Activated B cell treated with CpG ODN at 0.5 μM for 24 hours (primary cell): ENCODE measurements at regions of chr12 and their contacts with region 1.

Region 1: GRCh38 chr12:13864081-13864673 is 117.2 kb downstream of the GRIN2B start:
- DNase-seq: peak; percentile 45
- ATAC-seq: peak; percentile 79
- H3K4me3 Mint-ChIP-seq: no peak overlapping the region
- H3K27ac Mint-ChIP-seq: no peak overlapping the region
- H3K4me1 Mint-ChIP-seq: no peaks in the 10 kb centered on the region
- H3K27me3 Mint-ChIP-seq: peaks cover 29% of the 10 kb centered on the region
- CTCF ChIP-seq: peak; percentile 80

Region 2: GRCh38 chr12:13941258-13942249 is 77.4 kb after region 1 on chr12:
- CTCF ChIA-PET with region 1: interaction called, 3 read pairs
- POLR2A ChIA-PET with region 1: no interaction called
- intact Hi-C with region 1: loop called (anchors 2 kb)
- DNase-seq: no peak
- ATAC-seq: peak; percentile 31
- H3K4me3 Mint-ChIP-seq: no peak overlapping the region
- H3K27ac Mint-ChIP-seq: no peak overlapping the region
- H3K4me1 Mint-ChIP-seq: peaks cover 7% of the 10 kb centered on the region
- H3K27me3 Mint-ChIP-seq: peaks cover 20% of the 10 kb centered on the region
- CTCF ChIP-seq: no peak

Region 3: DNA sequence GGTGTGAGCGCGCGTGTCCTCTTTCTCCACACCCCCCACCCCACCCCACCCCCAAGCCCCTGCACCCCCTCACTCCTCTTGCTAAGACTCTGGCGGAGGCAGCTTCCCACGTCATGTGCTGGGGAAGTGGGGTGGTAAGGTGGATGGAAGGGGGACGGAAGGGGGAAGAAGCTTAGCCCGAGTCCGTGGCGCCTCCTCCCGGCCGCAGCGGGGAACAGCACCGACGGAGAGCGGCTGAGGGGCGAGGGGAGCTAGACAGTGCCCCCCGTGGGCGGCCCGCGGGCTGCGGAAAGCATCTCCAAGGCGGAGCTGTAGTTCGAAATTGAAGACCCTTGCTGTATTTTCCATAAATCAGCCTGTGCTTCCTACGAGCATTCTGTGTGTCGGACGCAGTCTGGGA is 117.8 kb after region 1 on chr12:
- CTCF ChIA-PET with region 1: interaction called, 3 read pairs
- POLR2A ChIA-PET with region 1: no interaction called
- intact Hi-C with region 1: loop called (anchors 5 kb)
- DNase-seq: no peak
- ATAC-seq: no peak
- H3K4me3 Mint-ChIP-seq: no peak overlapping the region
- H3K27ac Mint-ChIP-seq: no peak overlapping the region
- H3K4me1 Mint-ChIP-seq: peaks cover 19% of the 10 kb centered on the region
- H3K27me3 Mint-ChIP-seq: peaks cover 62% of the 10 kb centered on the region
- CTCF ChIP-seq: no peak

Region 4: DNA sequence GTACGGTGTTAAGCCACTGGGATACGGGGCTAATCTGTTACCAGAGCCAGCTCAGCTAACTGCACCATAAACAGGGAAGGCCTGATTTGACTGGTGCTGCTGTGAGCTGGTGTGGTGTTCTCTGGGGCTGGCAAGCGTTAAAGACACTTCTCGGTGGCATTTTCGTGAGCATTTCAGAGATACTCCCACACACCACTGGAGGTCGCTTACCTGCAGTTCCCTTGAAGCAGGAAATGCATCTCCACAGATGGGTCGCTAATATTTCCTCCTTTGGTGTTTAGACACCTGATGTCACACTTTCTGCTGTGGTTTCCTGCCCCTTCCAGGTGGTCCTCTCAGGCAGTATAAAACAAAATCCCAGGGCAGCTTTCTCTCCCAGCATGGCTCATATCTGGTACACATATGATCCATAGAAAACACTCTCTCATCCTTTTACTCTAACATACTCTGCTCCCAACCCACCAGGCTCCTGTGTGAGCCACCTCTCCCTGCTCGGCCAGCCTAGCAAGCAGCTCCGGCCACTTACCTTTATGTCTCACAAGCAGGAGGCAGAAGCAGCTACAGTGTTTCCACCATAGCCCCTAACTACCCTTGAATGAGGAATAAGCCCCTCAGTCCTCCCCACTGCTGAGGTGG is 247.2 kb after region 1 on chr12:
- CTCF ChIA-PET with region 1: interaction called, 6 read pairs
- POLR2A ChIA-PET with region 1: interaction called, 3 read pairs
- intact Hi-C with region 1: loop called (anchors 1 kb)
- DNase-seq: peak; percentile 21
- ATAC-seq: peak; percentile 96
- H3K4me3 Mint-ChIP-seq: no peak overlapping the region
- H3K27ac Mint-ChIP-seq: peak overlapping the region; percentile 18
- H3K4me1 Mint-ChIP-seq: peaks cover 13% of the 10 kb centered on the region
- H3K27me3 Mint-ChIP-seq: no peaks in the 10 kb centered on the region
- CTCF ChIP-seq: no peak